Psoas muscle (tissue), 8 donors: ENCODE measurements at regions of chr16 and their contacts with region 1.

Region 1: GRCh38 chr16:67800338-67800926 is 5.9 kb downstream of the RANBP10 start:
- DNase-seq: peak; percentile 71 to 88
- ATAC-seq: peak; percentile 97 to 99 (median 98)
- H3K4me3 ChIP-seq: peak overlapping the region; percentile 17
- H3K27ac ChIP-seq: peak overlapping the region; percentile 87
- H3K4me1 ChIP-seq: peaks cover 57% of the 10 kb centered on the region
- H3K27me3 ChIP-seq: no peaks in the 10 kb centered on the region
- CTCF ChIP-seq: no peak

Region 2: DNA sequence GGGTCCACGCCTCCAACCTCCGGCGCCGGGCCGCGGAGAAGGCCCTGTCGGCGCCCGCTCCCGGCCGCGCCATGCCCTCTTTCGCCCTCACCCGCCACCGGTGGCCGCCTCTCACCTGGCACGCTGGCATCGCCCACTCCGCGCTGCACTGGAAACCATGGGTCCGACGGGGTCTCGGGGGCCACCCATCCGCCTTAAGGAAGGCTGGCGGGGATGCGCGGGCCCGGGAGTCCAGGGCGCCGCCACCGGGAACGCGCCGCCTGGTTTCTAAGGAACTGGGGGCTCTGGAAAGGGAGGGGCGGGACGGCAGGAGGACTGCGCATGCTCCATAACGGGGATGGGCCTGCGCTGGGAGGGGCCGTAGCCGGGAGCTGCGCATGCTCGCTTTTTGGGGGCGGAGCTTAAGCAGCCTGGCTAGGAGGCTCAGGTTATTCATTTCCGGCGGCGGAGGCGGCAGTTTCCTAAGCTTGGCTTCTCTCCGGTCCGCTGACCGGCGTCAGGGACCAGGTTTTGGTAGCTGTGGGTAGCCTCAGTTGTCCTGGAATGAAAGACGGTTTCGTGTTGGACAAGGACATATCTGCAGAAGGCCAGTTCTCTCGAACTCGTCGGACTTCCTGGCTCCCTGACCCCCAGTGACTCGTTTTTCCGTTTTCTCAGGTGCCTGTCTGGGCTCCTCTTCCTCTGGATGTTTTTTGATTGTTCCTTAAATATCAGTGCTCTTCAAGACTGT is 81.2 kb before region 1 on chr16 and contains the start of gene GFOD2:
- intact Hi-C with region 1: loop called in 1 of 2 experiments (anchors 5 kb)
- DNase-seq: peak; percentile 96 to 99
- ATAC-seq: peak; percentile 97 to 99 (median 98)
- H3K4me3 ChIP-seq: peak within 1 kb of the TSS; percentile 99
- H3K27ac ChIP-seq: peak within 1 kb of the TSS; percentile 96
- H3K4me1 ChIP-seq: peaks cover 22% of the 10 kb centered on the region
- H3K27me3 ChIP-seq: no peaks in the 10 kb centered on the region
- CTCF ChIP-seq: no peak
- total RNA-seq, gene GFOD2: 8.0 to 11.3 (median 9.0) TPM